ENCODE measurements at regions of chr2 and their contacts with region 1.

Region 1: DNA sequence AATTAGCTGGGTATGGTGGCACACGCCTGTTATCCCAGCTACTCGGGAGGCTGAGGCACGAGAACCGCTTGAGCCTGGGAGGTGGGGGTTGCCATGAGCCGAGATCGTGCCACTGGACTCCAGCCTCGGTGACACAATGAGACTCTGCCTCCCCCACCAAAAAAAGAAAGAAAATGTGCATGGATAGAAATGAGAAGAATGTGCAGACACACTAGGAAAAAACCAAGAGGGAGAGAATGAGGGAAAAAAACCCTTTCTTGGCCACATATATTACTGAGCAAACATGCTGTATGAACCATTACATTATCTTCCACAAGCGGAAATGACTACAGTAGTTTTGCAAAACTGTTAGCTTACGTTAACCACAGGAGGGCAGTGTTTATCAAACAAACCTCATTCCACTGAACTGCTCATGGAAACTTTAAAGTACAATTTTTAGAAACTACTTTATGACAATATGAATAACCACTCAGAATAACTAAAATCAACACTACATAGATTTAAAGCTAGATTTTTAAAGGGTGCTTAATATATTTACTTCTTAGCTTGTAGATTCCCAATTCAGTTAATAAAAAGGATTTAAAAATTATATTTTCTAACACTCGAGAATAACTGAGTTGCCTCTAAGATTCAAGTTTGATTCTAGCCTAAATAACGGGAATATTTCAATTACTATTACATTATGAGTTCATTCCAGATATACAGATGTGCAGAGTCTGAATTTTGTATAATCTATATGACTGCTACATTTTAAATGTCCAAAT is 26.4 kb downstream of the ASXL2 start:
- DNase-seq: peak; percentile 85
- H3K4me3 Mint-ChIP-seq: peak overlapping the region; percentile 70
- H3K27ac Mint-ChIP-seq: peak overlapping the region; percentile 87
- H3K4me1 Mint-ChIP-seq: peaks cover 43% of the 10 kb centered on the region
- H3K27me3 Mint-ChIP-seq: no peaks in the 10 kb centered on the region

Region 2: GRCh38 chr2:25794544-25795276 is 57.2 kb before region 1 on chr2:
- intact Hi-C with region 1: loop called (anchors 10 kb)
- DNase-seq: no peak
- H3K4me3 Mint-ChIP-seq: peak overlapping the region; percentile 80
- H3K27ac Mint-ChIP-seq: peak overlapping the region; percentile 86
- H3K4me1 Mint-ChIP-seq: peaks cover 69% of the 10 kb centered on the region
- H3K27me3 Mint-ChIP-seq: no peaks in the 10 kb centered on the region

Region 3: DNA sequence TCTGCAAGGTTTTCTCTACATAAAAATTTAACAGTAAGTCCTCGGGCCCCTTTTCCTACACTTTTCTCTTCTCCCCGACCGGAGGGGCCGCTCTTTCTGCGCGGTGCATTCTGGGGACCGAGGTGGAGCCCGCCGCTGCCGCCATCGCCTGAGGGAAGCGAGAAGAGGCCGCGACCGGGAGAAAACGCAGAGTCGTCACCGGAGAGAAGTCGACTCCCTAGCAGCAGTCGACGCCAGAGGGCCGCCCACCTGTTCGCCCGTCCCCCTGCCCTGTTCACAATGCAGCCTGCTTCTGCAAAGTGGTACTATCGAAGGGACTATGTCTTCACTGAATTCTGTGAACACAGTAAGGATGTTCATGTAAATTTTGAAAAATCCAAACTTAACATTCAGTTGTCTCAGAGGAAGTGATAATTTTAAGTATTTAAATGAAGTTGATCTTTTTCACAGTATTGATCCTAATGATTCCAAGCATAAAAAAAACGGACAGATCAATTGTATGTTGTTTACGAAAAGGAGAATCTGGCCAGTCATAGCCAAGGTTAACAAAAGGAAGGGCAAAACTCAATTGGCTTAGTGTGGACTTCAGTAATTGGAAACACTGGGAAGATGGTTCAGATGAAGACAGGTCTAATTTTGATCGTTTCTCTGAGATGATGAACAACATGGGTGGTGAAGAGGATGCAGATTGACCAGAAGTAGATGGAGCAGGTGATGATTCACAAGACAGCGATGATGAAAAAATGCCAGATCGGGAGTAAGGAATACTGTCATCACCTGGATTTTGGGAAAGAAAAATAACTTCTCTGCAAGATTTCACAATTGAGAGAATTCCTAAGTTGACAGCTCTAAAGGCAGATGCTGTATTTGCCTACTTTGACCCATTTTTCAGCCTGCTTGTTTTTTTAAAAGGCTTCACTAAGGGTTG is 29.5 kb before region 1 on chr2:
- intact Hi-C with region 1: loop called (anchors 1 kb)
- DNase-seq: peak; percentile 88
- H3K4me3 Mint-ChIP-seq: peak overlapping the region; percentile 82
- H3K27ac Mint-ChIP-seq: peak overlapping the region; percentile 79
- H3K4me1 Mint-ChIP-seq: peaks cover 59% of the 10 kb centered on the region
- H3K27me3 Mint-ChIP-seq: no peaks in the 10 kb centered on the region

Region 4: DNA sequence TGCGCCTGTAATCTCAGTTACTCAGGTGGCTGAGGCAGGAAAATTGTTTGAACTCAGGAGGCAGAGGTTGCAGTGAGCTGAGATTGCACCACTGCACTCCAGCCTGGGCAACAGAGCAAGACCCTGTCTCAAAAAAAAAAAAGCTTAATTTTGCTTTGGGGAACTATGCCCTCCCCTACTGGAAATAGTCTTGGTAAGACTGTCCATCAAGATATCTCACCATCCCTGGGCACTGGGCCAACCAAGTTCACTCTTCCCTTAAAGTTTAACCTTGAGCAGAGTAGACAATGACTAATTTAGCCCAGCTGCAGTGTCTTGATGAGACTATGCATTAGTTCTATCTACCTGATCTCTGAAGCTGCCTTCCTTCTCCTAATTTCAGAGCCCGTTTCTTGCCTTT is 18.4 kb before region 1 on chr2:
- intact Hi-C with region 1: loop called (anchors 1 kb)
- DNase-seq: no peak
- H3K4me3 Mint-ChIP-seq: no peak overlapping the region
- H3K27ac Mint-ChIP-seq: peak overlapping the region; percentile 45
- H3K4me1 Mint-ChIP-seq: peaks cover 38% of the 10 kb centered on the region
- H3K27me3 Mint-ChIP-seq: no peaks in the 10 kb centered on the region

Region 5: DNA sequence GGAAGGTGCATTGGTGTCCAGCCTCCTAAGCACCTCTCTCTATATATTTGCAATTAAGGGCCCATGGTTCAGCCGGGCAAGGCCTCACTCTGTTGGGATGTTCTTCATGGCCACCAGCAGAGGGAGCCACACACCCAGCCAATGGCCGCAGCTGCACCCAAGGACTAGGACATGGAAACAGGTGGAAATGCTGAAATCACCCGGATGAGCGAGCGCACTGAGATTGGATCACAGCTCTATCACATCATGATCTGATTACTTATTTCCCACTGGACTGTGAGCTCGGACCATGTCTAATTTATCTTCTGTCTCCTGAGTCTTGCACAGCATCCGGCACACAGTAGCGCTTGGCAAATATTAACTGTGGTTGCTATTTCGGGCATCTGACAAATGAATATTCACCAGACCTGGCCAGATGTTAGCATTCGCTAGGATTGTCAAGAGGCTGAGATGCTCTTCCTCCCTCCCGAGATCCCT is 99.2 kb after region 1 on chr2:
- intact Hi-C with region 1: loop called (anchors 5 kb)
- DNase-seq: peak; percentile 90
- H3K4me3 Mint-ChIP-seq: no peak overlapping the region
- H3K27ac Mint-ChIP-seq: no peak overlapping the region
- H3K4me1 Mint-ChIP-seq: peaks cover 3% of the 10 kb centered on the region
- H3K27me3 Mint-ChIP-seq: no peaks in the 10 kb centered on the region

Region 6: DNA sequence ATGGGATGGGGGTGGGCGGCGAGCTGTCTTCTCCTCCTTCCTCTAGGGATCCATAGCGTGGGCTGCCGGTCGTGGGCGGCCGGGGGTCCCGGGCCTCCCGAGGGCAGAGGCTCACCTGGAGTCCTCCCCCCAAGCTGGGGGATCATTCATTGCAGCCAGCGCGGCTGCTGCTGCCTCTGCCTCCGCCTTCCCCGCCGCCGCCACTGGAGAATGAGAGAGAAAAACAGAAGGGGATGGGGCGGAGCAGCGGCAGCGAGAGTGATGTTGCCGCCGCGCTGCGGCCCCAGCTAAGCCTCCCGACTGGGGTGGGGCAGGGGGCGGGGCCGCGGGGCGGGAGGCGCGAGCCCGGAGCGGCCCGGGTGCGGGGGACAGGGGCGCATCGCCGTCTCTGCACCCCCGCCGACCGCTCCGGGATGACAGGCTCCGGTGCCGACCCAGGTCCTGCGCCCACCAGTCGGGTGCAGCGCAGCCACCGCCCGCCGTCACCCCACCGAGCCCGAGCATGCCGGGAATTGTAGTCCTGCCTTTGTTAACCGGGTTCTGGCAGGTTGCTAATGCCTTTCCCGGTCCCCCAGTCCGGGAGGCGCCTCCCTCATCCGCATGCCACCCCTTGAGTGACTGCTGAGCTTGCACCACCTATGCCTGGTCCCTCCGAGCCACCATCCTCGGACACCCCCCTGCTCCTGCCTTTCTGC is 130.5 kb after region 1 on chr2 and contains the start of gene KIF3C:
- intact Hi-C with region 1: loop called (anchors 5 kb)
- DNase-seq: peak; percentile 93
- H3K4me3 Mint-ChIP-seq: peak within 1 kb of the TSS; percentile 93
- H3K27ac Mint-ChIP-seq: peak within 1 kb of the TSS; percentile 87
- H3K4me1 Mint-ChIP-seq: peaks cover 15% of the 10 kb centered on the region
- H3K27me3 Mint-ChIP-seq: no peaks in the 10 kb centered on the region
- total RNA-seq, gene KIF3C: 6.2 and 6.7 TPM in 2 replicates

Region 7: DNA sequence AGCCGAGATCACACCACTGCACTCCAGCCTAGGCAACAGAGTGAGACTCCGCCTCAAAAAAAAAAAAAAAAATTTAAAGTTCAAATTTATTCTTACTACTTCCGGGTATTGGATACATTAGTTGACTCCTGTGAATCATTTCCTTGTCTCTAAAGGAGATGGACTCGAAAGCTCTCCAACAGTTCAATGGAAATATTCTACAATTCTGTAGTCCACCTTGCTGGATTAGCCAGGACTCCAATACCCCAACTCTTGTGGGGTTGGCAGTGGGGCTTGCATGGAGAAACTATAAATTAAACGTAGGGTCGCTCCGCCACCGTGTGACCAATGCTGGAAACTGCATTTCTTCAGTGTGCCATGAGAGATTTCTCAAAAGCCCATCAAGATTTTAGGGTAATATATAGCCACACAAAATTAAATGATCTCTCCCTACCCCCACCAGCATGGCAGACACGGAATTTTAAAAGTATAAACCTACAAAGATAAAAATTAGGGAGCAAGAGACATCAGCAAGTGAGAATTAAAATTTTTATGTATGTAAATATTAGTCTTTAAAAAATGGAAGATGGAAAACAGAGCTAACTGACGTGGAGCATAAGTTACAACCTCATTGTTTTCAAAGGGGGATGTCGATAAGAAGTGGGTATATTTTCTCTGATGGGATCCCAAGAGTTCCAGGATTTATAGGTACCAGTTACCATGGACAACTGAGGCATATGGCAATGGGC is 293.2 kb after region 1 on chr2:
- intact Hi-C with region 1: loop called (anchors 2 kb)
- DNase-seq: peak; percentile 89
- H3K4me3 Mint-ChIP-seq: no peak overlapping the region
- H3K27ac Mint-ChIP-seq: no peak overlapping the region
- H3K4me1 Mint-ChIP-seq: peaks cover 3% of the 10 kb centered on the region
- H3K27me3 Mint-ChIP-seq: peaks cover 9% of the 10 kb centered on the region